Naive thymus-derived CD4-positive, alpha-beta T cell (primary cell): ENCODE measurements at regions of chr7 and their contacts with region 1.

Region 1: DNA sequence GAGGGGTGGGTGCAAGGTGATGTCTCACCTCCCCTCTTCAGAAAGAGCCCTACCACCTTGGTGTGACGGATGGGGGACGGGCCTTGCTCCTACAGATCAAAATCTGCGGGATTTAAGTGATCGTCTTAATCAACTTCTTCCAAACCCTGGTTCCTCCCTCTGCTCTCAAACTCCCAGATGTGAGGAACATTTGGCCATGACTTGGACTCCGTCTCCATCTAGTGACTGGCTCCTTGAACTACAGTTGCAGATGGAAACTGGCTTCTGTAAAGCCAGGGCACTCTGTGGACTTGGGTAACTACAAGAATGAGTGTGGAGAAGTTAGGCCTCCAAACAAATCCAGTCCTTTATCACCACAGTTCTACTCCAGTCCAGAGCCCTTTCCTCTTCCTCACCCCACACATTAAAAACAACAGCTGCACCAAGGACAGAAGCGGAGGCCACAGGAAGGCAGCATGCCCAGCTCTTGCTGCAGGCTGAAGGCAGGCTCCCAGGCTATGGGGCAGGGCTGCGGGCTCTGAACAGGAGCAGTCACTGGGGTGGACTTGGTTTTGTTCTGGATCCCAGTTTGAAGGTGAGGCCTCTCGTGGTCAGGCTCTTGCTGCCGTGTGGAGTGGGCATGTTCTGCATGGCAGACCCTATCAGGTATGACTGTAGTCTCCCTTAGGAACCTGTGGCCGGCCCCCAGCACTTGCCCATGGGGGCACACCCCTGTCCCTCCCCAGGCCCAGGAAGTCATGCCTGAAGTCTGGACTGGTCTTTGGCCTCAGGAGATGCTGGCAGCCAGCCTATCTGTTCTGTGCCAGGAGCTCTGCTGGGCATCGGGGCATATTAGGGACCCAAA is 79.4 kb downstream of the VWC2 start:
- DNase-seq: peak in 2 of 9 donors; percentile 6
- ATAC-seq: no peak
- H3K4me3 ChIP-seq: no peak overlapping the region
- H3K4me3 Mint-ChIP-seq: no peak overlapping the region
- H3K27ac ChIP-seq: no peak overlapping the region
- H3K27ac Mint-ChIP-seq: no peak overlapping the region
- H3K4me1 ChIP-seq: no peaks in the 10 kb centered on the region
- H3K4me1 Mint-ChIP-seq: no peaks in the 10 kb centered on the region
- H3K27me3 ChIP-seq: no peaks in the 10 kb centered on the region
- H3K27me3 Mint-ChIP-seq: peaks cover 0 to 13% (median 12%) of the 10 kb centered on the region in 5 donors

Region 2: GRCh38 chr7:48299580-48300169 is 1553.2 kb before region 1 on chr7:
- CTCF ChIA-PET with region 1: no interaction called
- POLR2A ChIA-PET with region 1: no interaction called
- intact Hi-C with region 1: loop called in 1 of 2 experiments (anchors 2 kb)
- DNase-seq: peak in 3 of 9 donors; percentile 5 to 33 (median 22)
- ATAC-seq: peak; percentile 66
- H3K4me3 ChIP-seq: no peak overlapping the region
- H3K4me3 Mint-ChIP-seq: no peak overlapping the region
- H3K27ac ChIP-seq: no peak overlapping the region
- H3K27ac Mint-ChIP-seq: no peak overlapping the region
- H3K4me1 ChIP-seq: no peaks in the 10 kb centered on the region
- H3K4me1 Mint-ChIP-seq: peaks cover 0 to 7% (median 0%) of the 10 kb centered on the region in 7 donors
- H3K27me3 ChIP-seq: no peaks in the 10 kb centered on the region
- H3K27me3 Mint-ChIP-seq: peaks cover 2 to 11% (median 5%) of the 10 kb centered on the region in 5 donors

Region 3: GRCh38 chr7:49001610-49002033 is 851.2 kb before region 1 on chr7:
- CTCF ChIA-PET with region 1: no interaction called
- POLR2A ChIA-PET with region 1: no interaction called
- intact Hi-C with region 1: loop called in 1 of 2 experiments (anchors 2 kb)
- DNase-seq: no peak
- ATAC-seq: no peak
- H3K4me3 ChIP-seq: no peak overlapping the region
- H3K4me3 Mint-ChIP-seq: no peak overlapping the region
- H3K27ac ChIP-seq: no peak overlapping the region
- H3K27ac Mint-ChIP-seq: no peak overlapping the region
- H3K4me1 ChIP-seq: no peaks in the 10 kb centered on the region
- H3K4me1 Mint-ChIP-seq: peaks cover 0 to 1% (median 0%) of the 10 kb centered on the region in 7 donors
- H3K27me3 ChIP-seq: no peaks in the 10 kb centered on the region
- H3K27me3 Mint-ChIP-seq: no peaks in the 10 kb centered on the region